ENCODE measurements at regions of chr13 and their contacts with region 1.

Region 1: DNA sequence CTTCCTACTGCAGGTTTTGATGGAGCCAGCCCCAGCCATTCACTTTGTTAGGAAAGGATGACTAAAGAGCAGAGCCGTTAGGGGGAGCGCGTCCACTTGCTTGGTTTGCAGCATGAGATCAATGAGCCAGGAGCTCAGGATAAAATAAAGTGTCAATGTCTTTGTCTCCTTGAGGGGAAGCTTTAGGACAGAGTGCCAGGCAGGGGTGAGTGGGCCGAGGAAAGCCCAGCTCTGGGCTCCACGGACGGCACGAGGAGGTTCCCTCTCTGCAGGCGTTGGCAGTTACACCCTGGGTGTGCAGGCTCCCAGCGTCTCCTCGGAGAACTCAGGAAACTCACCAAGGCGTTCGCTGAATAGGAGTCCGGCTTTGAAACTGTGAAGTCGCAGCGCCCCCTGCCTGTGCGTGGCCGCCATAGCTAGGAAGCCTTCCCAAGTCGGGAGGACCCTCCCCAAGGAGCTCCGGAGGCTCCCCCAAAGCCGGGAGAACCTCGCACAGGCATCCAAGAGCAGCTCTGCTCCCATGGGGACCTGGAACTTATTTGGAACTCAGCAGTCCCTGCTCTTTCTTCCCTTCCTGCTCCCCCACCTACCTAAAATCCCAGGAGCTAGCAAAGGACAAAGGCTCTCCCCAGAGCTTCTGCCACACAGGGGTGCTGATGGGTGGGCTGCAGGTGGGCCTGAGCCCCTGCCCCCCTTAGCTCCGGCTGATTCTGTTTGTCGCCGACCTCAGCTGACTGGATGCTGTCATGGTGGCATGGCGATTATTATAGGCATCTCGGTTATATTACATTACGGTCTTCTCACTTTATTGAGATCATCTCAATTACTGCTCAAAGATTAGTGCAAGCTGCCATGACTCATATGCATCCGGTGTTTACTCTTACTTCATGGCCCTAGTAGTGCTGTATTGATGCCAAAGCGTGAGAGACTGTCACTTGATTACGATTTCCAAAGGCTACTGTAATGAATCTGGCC is 34.4 kb downstream of the GSX1 start:
- DNase-seq: peak; percentile 88 to 94 (median 89)
- H3K4me3 ChIP-seq: peak overlapping the region in 2 of 3 donors; percentile 28 to 34
- H3K27ac ChIP-seq: no peak overlapping the region
- H3K4me1 ChIP-seq: peaks cover 0 to 3% (median 0%) of the 10 kb centered on the region in 3 donors
- H3K27me3 ChIP-seq: peaks cover 13% of the 10 kb centered on the region
- CTCF ChIP-seq: peak; percentile 93

Region 2: DNA sequence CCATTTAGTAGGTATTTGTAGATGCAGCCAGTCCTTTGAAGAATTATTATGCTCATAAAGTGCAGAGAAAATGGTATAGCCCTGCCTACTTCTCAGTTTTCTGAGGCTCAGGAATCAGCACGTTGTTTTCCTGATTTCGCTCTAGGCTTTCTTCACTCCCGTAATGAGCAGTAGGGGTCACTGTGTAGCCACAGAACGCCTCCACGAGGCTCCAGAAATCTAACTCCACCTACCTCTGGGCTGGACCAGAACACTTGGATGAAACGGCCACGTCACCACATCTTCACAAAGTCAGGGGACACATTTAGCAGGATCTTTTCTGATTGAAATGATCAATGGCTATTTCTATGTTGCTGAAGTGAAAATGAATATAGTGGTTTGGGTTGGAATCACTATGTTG is 452.0 kb before region 1 on chr13:
- intact Hi-C with region 1: loop called (anchors 5 kb)
- DNase-seq: peak in 4 of 5 donors; percentile 65 to 89 (median 76)
- H3K4me3 ChIP-seq: no peak overlapping the region
- H3K27ac ChIP-seq: no peak overlapping the region
- H3K4me1 ChIP-seq: no peaks in the 10 kb centered on the region
- H3K27me3 ChIP-seq: no peaks in the 10 kb centered on the region
- CTCF ChIP-seq: peak; percentile 80

Region 3: GRCh38 chr13:27523346-27524073 is 303.2 kb before region 1 on chr13:
- intact Hi-C with region 1: loop called (anchors 10 kb)
- DNase-seq: no peak
- H3K4me3 ChIP-seq: no peak overlapping the region
- H3K27ac ChIP-seq: no peak overlapping the region
- H3K4me1 ChIP-seq: no peaks in the 10 kb centered on the region
- H3K27me3 ChIP-seq: no peaks in the 10 kb centered on the region
- CTCF ChIP-seq: no peak

Measured in kidney (tissue), 22 donors.